Stomach (tissue), 19 donors: ENCODE measurements at regions of chr10 and their contacts with region 1.

Region 1: GRCh38 chr10:73879296-73880173 is 5.2 kb upstream of the CAMK2G start:
- DNase-seq: peak; percentile 91 to 96
- H3K4me3 ChIP-seq: no peak overlapping the region
- H3K27ac ChIP-seq: peak overlapping the region in 3 of 5 donors; percentile 14 to 46 (median 15)
- H3K4me1 ChIP-seq: peaks cover 3 to 34% (median 25%) of the 10 kb centered on the region in 4 donors
- H3K27me3 ChIP-seq: no peaks in the 10 kb centered on the region
- CTCF ChIP-seq: peak in 6 of 7 experiments; percentile 84 to 99 (median 96)
- EP300 ChIP-seq: no peak
- POLR2A ChIP-seq: no peak

Region 2: GRCh38 chr10:73439605-73440312 is 439.8 kb before region 1 on chr10:
- intact Hi-C with region 1: no loop called
- DNase-seq: no peak
- H3K4me3 ChIP-seq: no peak overlapping the region
- H3K27ac ChIP-seq: no peak overlapping the region
- H3K4me1 ChIP-seq: peaks cover 0 to 8% (median 0%) of the 10 kb centered on the region in 4 donors
- H3K27me3 ChIP-seq: no peaks in the 10 kb centered on the region
- CTCF ChIP-seq: no peak
- EP300 ChIP-seq: no peak
- POLR2A ChIP-seq: no peak

Region 3: DNA sequence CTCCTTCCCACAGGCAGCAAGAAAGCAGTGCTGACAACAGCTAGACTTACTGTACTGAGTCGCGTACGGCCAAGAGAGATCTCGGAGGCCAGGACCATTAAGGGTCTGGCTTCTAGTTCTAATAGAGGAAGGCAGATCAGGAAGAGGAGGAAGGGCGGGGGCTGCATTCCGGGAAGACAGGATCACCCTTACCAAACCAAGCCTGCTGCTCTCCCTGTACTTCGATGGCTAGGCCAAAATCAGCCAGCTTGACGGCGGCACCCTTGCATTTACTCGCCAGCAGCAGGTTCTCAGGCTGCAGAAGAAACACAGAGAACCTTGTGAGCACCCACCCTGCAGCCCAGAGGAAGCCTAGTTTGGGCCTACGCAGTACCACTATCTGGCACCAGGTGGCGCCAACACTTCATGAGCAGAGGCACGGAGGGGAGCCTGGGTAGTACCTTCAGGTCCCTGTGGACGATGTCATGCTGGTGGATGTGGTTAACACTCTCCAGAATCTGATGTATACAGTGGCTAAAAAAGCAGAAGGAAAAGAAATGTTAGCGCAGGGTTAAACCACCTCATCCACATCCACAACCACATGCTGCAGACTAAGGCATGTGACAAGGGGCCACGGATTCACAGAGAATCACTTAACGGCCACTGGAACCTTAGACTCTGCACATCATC is 30.6 kb before region 1 on chr10:
- intact Hi-C with region 1: loop called (anchors 5 kb)
- DNase-seq: peak; percentile 88 to 93
- H3K4me3 ChIP-seq: no peak overlapping the region
- H3K27ac ChIP-seq: peak overlapping the region in 4 of 5 donors; percentile 64 to 89 (median 76)
- H3K4me1 ChIP-seq: peaks cover 4 to 43% (median 26%) of the 10 kb centered on the region in 4 donors
- H3K27me3 ChIP-seq: no peaks in the 10 kb centered on the region
- CTCF ChIP-seq: peak in 6 of 7 experiments; percentile 72 to 100 (median 100)
- EP300 ChIP-seq: no peak
- POLR2A ChIP-seq: no peak

Region 4: GRCh38 chr10:74262856-74263255 is 383.3 kb after region 1 on chr10:
- intact Hi-C with region 1: no loop called
- DNase-seq: no peak
- H3K4me3 ChIP-seq: no peak overlapping the region
- H3K27ac ChIP-seq: no peak overlapping the region
- H3K4me1 ChIP-seq: peaks cover 0 to 11% (median 0%) of the 10 kb centered on the region in 4 donors
- H3K27me3 ChIP-seq: no peaks in the 10 kb centered on the region
- CTCF ChIP-seq: no peak
- EP300 ChIP-seq: no peak
- POLR2A ChIP-seq: no peak